ENCODE measurements at regions of chr14 and their contacts with region 1.

Region 1: DNA sequence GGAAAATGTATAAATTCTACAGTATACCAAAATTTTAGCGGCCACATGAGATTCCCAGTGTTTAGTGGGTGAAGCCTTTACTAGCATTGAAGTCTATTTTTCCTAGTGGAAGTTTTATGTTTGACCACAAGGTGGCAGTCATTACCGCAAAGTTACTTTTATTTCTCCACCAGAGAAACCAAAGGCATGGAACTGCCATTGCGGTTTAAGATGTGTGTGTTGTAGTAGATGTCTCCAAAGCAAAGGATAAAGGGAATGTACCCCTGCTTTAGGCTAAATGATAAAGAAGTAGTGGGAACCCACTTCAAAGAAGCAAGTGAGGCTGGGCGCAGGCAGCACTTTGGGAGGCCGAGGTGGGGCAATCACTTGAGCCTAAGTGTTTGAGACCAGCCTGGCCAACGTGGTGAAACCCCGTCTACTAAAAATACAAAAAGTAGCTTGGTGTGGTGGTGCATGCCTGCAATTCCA is 140.5 kb downstream of the PRKCH start:
- DNase-seq: no peak
- H3K4me3 ChIP-seq: no peak overlapping the region
- H3K27ac ChIP-seq: peak overlapping the region; percentile 67
- H3K4me1 ChIP-seq: peaks cover 43% of the 10 kb centered on the region
- H3K27me3 ChIP-seq: no peaks in the 10 kb centered on the region
- CTCF ChIP-seq: peak; percentile 85

Region 2: DNA sequence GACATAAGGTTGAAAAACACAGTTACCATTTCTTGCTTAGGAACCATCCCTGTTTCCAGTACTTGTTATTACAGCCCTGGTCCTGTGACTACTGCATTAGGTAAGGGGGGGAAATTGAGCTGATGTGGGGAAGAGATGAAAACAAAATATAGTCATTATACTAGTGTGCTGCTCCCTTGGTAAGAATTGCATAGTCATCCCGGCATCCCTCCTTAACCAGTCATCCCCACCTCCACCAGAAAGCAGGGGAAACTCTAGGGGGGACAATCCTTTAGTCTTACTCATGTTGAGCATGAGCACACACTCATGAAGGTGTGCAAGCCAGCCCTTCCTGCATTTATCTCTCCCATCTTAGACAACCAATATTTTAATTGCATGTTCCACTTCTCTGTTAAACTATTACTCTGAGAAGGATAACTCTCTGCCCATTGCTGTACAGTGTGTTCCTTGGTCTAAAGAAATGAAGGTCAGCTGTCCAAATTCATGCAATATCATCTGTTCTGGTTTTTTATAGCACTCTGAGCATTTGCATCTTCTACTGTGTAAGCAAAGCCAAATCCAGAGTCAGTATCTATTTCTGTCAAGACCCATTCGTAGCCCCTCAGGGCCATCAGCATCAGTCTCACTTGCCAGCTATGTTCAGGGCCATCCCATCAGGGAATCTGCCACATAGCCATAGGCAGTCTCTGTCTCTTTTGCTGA is 227.5 kb before region 1 on chr14:
- intact Hi-C with region 1: no loop called
- DNase-seq: no peak
- H3K4me3 ChIP-seq: no peak overlapping the region
- H3K27ac ChIP-seq: no peak overlapping the region
- H3K4me1 ChIP-seq: no peaks in the 10 kb centered on the region
- H3K27me3 ChIP-seq: peaks cover 22% of the 10 kb centered on the region
- CTCF ChIP-seq: no peak

Region 3: GRCh38 chr14:61730756-61731373 is 269.0 kb after region 1 on chr14:
- intact Hi-C with region 1: loop called (anchors 5 kb)
- DNase-seq: no peak
- H3K4me3 ChIP-seq: no peak overlapping the region
- H3K27ac ChIP-seq: peak overlapping the region; percentile 45
- H3K4me1 ChIP-seq: peaks cover 39% of the 10 kb centered on the region
- H3K27me3 ChIP-seq: no peaks in the 10 kb centered on the region
- CTCF ChIP-seq: peak; percentile 64

Region 4: DNA sequence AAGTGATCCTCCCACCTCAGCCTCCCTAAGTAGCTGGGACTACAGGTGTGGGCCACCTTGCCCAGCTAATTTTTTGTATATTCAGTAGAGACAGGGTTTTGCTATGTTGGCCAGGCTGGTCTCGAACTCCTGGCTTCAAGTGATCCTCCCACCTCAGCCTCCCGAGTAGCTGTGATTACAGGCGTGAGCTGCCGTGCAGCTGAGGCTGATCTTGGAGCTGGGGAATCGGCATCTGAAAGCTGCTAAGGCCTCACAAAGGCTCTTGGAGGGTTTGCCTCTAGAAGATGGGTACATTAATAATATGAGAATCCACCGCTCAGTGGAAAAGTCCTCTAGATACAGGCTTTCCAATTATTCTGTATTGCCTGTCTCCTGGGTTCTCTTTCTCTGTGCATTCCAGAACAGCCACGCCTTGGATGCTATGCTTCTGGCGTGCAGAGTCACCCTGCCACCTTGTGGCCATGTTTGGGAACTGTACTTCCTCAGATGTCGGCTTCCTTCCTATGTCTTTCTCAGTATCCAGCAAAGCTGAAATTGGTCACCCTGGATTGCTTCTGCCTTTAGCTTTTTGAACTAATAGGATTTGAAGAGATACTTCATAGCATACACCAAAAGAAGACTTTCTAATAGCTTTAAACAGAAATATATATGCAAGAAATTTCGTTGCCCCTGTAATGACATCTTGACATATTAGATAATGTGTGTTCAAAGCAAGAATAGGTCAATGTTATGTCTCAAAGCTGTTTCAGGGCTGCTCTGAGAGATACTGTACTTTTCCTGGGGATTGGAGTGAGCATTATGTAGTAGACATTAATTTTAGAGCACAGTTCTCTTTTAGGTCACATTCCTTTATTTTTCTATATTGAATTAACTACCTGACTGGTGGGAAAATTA is 375.7 kb after region 1 on chr14:
- intact Hi-C with region 1: loop called (anchors 2 kb)
- DNase-seq: peak; percentile 69
- H3K4me3 ChIP-seq: no peak overlapping the region
- H3K27ac ChIP-seq: no peak overlapping the region
- H3K4me1 ChIP-seq: no peaks in the 10 kb centered on the region
- H3K27me3 ChIP-seq: no peaks in the 10 kb centered on the region
- CTCF ChIP-seq: peak; percentile 96

Measured in left ventricle myocardium inferior (tissue), 1 donor.